H1 (cell line): ENCODE measurements at regions of chr3 and their contacts with region 1.

Region 1: GRCh38 chr3:127831723-127832172 is 9.4 kb upstream of the MGLL start:
- DNase-seq: peak in 1 of 2 experiments; percentile 82
- H3K4me3 ChIP-seq: no peak overlapping the region
- H3K27ac ChIP-seq: no peak overlapping the region
- H3K4me1 ChIP-seq: no peaks in the 10 kb centered on the region
- H3K27me3 ChIP-seq: no peaks in the 10 kb centered on the region; a peak in 1 of 7 replicates
- CTCF ChIP-seq: peak; percentile 90 to 96 (median 94)
- EP300 ChIP-seq: no peak
- POLR2A ChIP-seq: no peak
- RAD21 ChIP-seq: peak; percentile 94 to 98

Region 2: GRCh38 chr3:127652231-127652995 is 179.3 kb before region 1 on chr3:
- CTCF ChIA-PET with region 1: interaction called, 27 read pairs
- POLR2A ChIA-PET with region 1: no interaction called
- DNase-seq: peak in 1 of 2 experiments; percentile 72
- H3K4me3 ChIP-seq: no peak overlapping the region
- H3K27ac ChIP-seq: no peak overlapping the region
- H3K4me1 ChIP-seq: no peaks in the 10 kb centered on the region
- H3K27me3 ChIP-seq: no peaks in the 10 kb centered on the region
- CTCF ChIP-seq: peak; percentile 68 to 91 (median 88)
- EP300 ChIP-seq: no peak
- POLR2A ChIP-seq: no peak
- RAD21 ChIP-seq: peak; percentile 89 to 93

Region 3: DNA sequence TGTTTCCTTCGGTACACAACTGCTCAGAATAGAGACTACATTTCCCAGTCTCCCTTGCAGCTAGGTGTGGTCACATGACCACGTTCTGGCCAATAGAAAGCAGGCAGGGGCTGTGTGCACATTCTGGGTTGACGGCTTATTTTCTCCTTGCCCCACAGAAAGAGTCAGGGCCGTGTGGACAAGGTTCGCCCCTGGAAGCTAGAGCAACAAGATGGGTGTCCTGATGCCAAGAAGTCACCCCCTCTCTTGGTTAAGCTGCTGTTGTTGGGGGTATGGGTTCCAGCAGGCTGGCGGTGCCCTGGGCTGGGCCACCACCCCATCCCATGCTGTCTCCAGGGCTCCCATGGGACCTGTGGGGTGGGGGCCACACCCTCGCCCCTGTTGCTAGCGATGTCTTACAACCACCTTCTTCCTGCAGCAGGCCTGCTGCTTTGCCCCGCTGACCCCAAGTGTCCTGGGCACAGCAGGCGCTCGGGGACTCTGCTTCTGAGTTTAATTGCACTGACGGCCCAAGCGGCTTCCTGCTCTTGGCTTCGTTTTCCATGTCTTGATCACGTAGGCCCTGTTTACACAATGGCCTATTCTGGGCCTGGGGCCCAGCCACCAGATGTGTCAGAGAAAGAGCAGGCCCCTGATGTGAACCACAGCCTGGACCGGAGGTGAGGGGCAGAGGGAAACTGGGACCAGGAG is 134.1 kb before region 1 on chr3:
- CTCF ChIA-PET with region 1: interaction called, 105 read pairs
- POLR2A ChIA-PET with region 1: no interaction called
- DNase-seq: peak in 1 of 2 experiments; percentile 72
- H3K4me3 ChIP-seq: peak overlapping the region in 1 of 4 experiments; percentile 3; a peak in 1 of 8 replicates
- H3K27ac ChIP-seq: no peak overlapping the region
- H3K4me1 ChIP-seq: peaks cover 0 to 3% (median under 1%) of the 10 kb centered on the region in 4 experiments; a peak in 2 of 7 replicates
- H3K27me3 ChIP-seq: no peaks in the 10 kb centered on the region
- CTCF ChIP-seq: no peak
- EP300 ChIP-seq: no peak
- POLR2A ChIP-seq: no peak
- RAD21 ChIP-seq: no peak

Region 4: GRCh38 chr3:127817396-127817841 is 14.3 kb before region 1 on chr3:
- CTCF ChIA-PET with region 1: interaction called, 28 read pairs
- POLR2A ChIA-PET with region 1: interaction called, 3 read pairs
- DNase-seq: no peak
- H3K4me3 ChIP-seq: no peak overlapping the region
- H3K27ac ChIP-seq: no peak overlapping the region
- H3K4me1 ChIP-seq: peaks cover 0 to 10% (median 1%) of the 10 kb centered on the region in 4 experiments; a peak in 6 of 7 replicates
- H3K27me3 ChIP-seq: peaks cover 3 to 14% (median 7%) of the 10 kb centered on the region in 4 experiments; a peak in 6 of 7 replicates
- CTCF ChIP-seq: no peak
- EP300 ChIP-seq: no peak
- POLR2A ChIP-seq: no peak
- RAD21 ChIP-seq: no peak

Region 5: DNA sequence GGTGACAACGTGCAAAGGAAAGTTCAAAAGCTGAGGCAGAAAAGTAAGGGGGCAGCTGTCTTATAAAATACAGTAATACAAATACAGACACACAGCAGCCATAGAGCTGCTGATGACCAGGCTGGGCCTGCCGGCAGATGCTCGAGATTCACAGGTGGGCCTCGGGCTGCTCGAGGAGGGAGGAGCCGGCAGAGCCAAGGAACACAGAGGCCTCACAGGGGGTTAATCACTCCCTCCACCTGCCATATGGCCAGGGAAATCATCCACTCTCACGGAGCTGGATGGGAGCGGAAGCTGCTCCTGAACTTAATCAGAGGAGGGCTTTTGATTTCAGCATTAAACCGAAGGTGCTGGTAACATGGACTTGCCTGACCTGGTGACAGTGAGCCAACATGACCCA is 20.2 kb after region 1 on chr3:
- CTCF ChIA-PET with region 1: interaction called, 11 read pairs
- POLR2A ChIA-PET with region 1: no interaction called
- DNase-seq: peak in 1 of 2 experiments; percentile 53
- H3K4me3 ChIP-seq: no peak overlapping the region
- H3K27ac ChIP-seq: no peak overlapping the region
- H3K4me1 ChIP-seq: no peaks in the 10 kb centered on the region
- H3K27me3 ChIP-seq: no peaks in the 10 kb centered on the region
- CTCF ChIP-seq: no peak
- EP300 ChIP-seq: no peak
- POLR2A ChIP-seq: no peak
- RAD21 ChIP-seq: no peak